ENCODE measurements at regions of chr21 and their contacts with region 1.

Region 1: GRCh38 chr21:30434033-30434631 is 4.1 kb downstream of the KRTAP13-4 start:
- DNase-seq: peak; percentile 50 to 61
- H3K4me3 ChIP-seq: no peak overlapping the region
- H3K27ac ChIP-seq: no peak overlapping the region
- H3K4me1 ChIP-seq: peaks cover 0 to 4% (median 0%) of the 10 kb centered on the region in 4 experiments; a peak in 1 of 7 replicates
- H3K27me3 ChIP-seq: no peaks in the 10 kb centered on the region
- CTCF ChIP-seq: peak; percentile 68 to 77 (median 70)
- EP300 ChIP-seq: no peak
- POLR2A ChIP-seq: no peak
- RAD21 ChIP-seq: peak; percentile 64 to 74

Region 2: GRCh38 chr21:30444204-30444603 is 10.1 kb after region 1 on chr21:
- CTCF ChIA-PET with region 1: interaction called, 20 read pairs
- POLR2A ChIA-PET with region 1: no interaction called
- DNase-seq: no peak
- H3K4me3 ChIP-seq: no peak overlapping the region
- H3K27ac ChIP-seq: no peak overlapping the region
- H3K4me1 ChIP-seq: no peaks in the 10 kb centered on the region; a peak in 3 of 7 replicates
- H3K27me3 ChIP-seq: no peaks in the 10 kb centered on the region
- CTCF ChIP-seq: peak in 2 of 3 experiments; percentile 38 to 43; a peak in 3 of 4 replicates
- EP300 ChIP-seq: no peak
- POLR2A ChIP-seq: no peak
- RAD21 ChIP-seq: peak; percentile 58 to 71

Region 3: DNA sequence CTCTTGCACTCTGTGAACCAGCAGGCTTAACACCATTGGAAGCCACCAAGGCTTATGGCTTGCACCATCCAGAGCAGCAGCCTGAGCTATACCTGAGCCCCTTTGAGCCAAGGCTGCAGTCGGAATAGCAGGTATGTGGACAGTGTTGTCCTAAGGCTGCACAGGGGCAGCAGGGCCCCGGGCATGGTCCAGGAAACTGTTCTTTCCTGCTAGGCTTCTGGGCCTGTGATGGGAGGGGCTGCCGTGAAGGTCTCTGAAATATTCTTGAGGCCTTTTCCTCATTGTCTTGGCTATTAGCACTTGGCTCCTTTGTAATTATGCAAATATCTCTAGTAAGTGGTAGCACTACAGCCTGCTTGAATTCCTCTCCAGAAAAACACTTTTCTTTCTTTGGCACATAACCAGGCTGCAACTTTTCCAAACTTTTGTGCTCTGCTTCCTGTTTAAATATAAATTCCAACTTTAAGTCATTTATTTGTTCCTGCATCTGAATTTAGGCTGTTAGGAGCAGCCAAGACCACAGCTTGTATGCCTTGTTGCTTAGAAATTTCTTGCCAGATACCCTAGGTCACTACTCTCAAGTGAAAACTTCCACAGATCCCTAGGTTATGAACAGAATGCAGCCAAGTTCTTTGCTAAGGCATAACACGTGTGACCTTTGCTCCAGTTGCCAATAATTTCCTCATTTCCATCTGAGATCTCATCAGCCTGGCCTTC is 191.5 kb after region 1 on chr21:
- CTCF ChIA-PET with region 1: no interaction called
- POLR2A ChIA-PET with region 1: no interaction called
- DNase-seq: no peak
- H3K4me3 ChIP-seq: no peak overlapping the region
- H3K27ac ChIP-seq: no peak overlapping the region
- H3K4me1 ChIP-seq: peaks cover 0 to 2% (median 0%) of the 10 kb centered on the region in 4 experiments; a peak in 2 of 7 replicates
- H3K27me3 ChIP-seq: peaks cover 0 to 1% (median 0%) of the 10 kb centered on the region in 4 experiments; a peak in 1 of 7 replicates
- CTCF ChIP-seq: no peak
- EP300 ChIP-seq: no peak
- POLR2A ChIP-seq: no peak
- RAD21 ChIP-seq: no peak